Activated naive CD8-positive, alpha-beta T cell treated with anti-CD3 and anti-CD28 coated beads, Interleukin-2, amount 10 ng/mL, durations not matched to agents 7 days and 5 days (primary cell): ENCODE measurements at regions of chr14 and their contacts with region 1.

Region 1: DNA sequence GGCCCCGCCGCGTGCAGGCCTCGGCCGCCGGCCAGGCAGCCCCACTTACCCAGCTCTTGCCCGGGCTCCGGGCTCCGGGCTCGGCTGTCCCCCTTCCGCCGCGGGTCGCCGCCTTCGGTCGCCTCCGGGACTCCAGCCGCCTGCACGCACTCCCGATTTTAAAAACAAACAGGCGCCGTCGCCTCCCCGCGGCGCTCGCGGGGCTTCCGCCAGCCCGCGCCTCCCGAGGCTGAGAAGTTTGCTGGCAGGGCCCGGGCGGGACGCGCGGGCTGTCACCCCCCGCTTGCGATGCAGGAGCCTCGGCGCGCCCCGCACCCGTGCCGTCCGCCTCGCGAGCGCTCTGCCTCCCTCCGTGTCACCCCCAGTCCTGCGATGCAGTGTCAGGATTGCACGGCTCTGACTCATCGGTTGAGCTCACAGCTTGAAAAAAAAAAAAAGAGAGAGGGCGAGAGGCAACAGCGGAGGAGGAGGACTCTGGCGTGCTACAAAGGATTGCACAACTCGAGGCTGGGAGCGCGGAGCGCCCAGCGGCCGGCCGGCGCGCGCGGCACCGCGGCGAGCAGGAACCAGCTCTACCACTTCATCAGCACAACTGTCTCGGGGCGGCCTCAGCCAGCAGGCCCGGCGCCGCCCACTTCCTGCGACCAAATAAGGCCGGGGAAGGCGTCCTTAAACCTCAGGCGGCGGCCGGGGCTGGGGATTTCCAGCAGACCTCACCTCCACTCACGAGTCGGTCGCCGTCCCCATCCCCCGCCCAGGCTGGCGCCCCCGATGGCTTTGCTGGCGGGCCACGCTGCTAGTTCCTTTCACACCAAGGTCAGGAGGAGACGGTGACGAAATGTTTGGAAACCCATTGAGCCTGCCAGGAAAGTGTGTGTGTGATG is 45.8 kb upstream of the PNMA1 start:
- DNase-seq: peak; percentile 95
- ATAC-seq: peak; percentile 80
- H3K4me3 Mint-ChIP-seq: peak overlapping the region; percentile 87
- H3K27ac Mint-ChIP-seq: peak overlapping the region; percentile 94
- H3K4me1 Mint-ChIP-seq: peaks cover 67% of the 10 kb centered on the region
- H3K27me3 Mint-ChIP-seq: no peaks in the 10 kb centered on the region

Region 2: GRCh38 chr14:73696466-73697400 is 63.2 kb before region 1 on chr14:
- POLR2A ChIA-PET with region 1: no interaction called
- DNase-seq: no peak
- ATAC-seq: peak; percentile 63
- H3K4me3 Mint-ChIP-seq: no peak overlapping the region
- H3K27ac Mint-ChIP-seq: no peak overlapping the region
- H3K4me1 Mint-ChIP-seq: peaks cover 3% of the 10 kb centered on the region
- H3K27me3 Mint-ChIP-seq: no peaks in the 10 kb centered on the region

Region 3: GRCh38 chr14:73713803-73714655 is 45.9 kb before region 1 on chr14 and contains the start of gene PNMA1:
- POLR2A ChIA-PET with region 1: interaction called, 20 read pairs
- DNase-seq: peak; percentile 92
- ATAC-seq: peak; percentile 79
- H3K4me3 Mint-ChIP-seq: peak within 1 kb of the TSS; percentile 96
- H3K27ac Mint-ChIP-seq: peak within 1 kb of the TSS; percentile 97
- H3K4me1 Mint-ChIP-seq: peaks cover 21% of the 10 kb centered on the region
- H3K27me3 Mint-ChIP-seq: no peaks in the 10 kb centered on the region
- total RNA-seq, gene PNMA1: 32.1 to 34.9 TPM

Region 4: DNA sequence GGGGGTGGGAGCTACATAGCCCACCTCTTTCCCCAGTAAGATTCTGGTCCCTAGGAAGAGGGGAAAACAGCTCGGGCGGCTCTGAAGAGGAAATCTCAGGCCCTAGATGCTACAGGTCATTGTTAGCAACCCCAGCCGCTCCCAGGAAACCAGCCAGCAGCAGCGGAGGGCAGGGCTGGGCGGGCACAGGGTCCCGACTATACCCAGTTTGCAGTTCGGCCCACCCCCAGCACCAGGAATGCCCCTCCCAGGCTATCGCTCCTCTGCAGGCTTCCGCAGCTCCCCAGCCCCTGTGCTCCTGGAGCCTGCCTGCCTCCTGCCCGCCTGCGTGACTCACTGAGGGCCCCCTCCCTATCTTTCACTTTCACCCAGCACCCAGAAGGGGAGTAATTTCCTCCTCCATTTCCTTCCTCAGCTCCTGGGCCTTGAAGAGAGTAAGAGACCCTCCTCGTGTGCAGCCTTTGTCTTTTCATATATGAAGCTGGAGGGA is 18.5 kb before region 1 on chr14:
- POLR2A ChIA-PET with region 1: interaction called, 286 read pairs
- DNase-seq: no peak
- ATAC-seq: peak; percentile 71
- H3K4me3 Mint-ChIP-seq: peak overlapping the region; percentile 84
- H3K27ac Mint-ChIP-seq: peak overlapping the region; percentile 94
- H3K4me1 Mint-ChIP-seq: peaks cover 57% of the 10 kb centered on the region
- H3K27me3 Mint-ChIP-seq: no peaks in the 10 kb centered on the region

Region 5: GRCh38 chr14:73785873-73786695 is 26.1 kb after region 1 on chr14:
- POLR2A ChIA-PET with region 1: interaction called, 263 read pairs
- DNase-seq: peak; percentile 76
- ATAC-seq: peak; percentile 68
- H3K4me3 Mint-ChIP-seq: peak overlapping the region; percentile 94
- H3K27ac Mint-ChIP-seq: peak overlapping the region; percentile 93
- H3K4me1 Mint-ChIP-seq: peaks cover 59% of the 10 kb centered on the region
- H3K27me3 Mint-ChIP-seq: no peaks in the 10 kb centered on the region

Region 6: DNA sequence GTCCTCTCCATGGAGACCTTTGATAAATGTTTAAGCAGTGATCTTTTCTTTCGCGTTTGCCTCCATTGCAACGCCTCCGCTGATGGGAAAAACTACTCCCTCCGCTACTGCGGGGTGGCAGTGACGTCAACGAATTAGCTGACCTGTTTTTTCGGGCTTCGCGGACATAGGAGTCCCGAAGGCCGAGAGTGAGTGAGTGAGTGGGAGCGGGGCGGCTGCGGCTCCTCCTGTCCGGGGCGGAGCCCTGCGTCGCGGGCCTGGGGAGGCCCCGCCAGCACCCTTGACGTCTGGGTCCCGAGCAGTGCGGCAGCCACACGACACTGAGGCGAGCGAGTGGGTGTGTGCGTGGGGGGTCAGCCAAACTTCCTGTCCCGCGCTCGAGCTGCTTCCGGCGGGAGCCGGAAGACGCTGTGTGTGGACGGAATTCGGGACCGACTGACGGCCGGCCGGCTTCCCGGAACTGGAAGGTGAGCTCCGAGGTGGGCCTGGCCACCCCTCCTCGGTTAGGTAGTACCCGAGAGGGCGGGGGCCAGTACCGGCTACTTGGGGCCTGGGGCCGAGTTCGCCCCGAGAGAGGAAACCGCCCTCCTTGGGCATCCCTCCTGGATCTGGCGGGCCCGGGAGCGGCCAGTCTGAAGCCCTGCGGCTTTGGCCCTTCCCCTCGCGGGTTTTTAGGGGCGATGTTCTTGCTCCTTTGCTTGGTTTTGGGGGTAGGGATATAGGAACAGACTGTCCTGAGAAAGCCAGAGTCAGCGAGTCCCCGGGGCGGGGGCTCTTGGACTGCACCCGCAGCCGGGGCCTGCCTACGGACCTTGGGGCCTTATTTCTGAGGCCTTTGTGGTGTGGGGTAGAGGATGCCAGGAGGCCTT is 126.7 kb after region 1 on chr14 and contains the start of gene ZNF410:
- POLR2A ChIA-PET with region 1: interaction called, 16 read pairs
- DNase-seq: peak; percentile 85
- ATAC-seq: peak; percentile 99
- H3K4me3 Mint-ChIP-seq: peak within 1 kb of the TSS; percentile 96
- H3K27ac Mint-ChIP-seq: peak within 1 kb of the TSS; percentile 97
- H3K4me1 Mint-ChIP-seq: peaks cover 46% of the 10 kb centered on the region
- H3K27me3 Mint-ChIP-seq: no peaks in the 10 kb centered on the region
- total RNA-seq, gene ZNF410: 53.3 to 56.5 TPM